ENCODE measurements at regions of chr12 and their contacts with region 1.

Region 1: DNA sequence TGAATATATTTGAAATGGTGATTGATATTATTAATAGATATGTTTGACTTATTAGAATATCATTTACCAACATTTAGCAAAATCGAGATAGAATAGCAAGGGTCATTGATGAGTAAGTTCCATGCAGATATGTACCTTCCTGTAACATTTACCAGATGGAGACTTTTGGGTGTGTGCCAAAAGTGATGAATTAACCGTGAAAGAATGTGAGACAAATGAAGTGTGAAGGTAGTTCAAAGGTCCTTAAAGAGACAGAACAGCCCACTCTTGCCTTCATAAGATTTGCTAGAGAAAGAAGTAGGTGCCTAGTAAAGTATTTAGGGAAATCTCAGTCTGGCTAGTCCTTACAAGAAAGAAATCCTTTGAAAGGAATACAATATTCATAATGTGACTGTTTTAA is 45.5 kb downstream of the FGD4 start:
- DNase-seq: no peak
- ATAC-seq: no peak
- H3K4me3 ChIP-seq: no peak overlapping the region
- H3K4me3 Mint-ChIP-seq: no peak overlapping the region
- H3K27ac ChIP-seq: no peak overlapping the region
- H3K27ac Mint-ChIP-seq: no peak overlapping the region
- H3K4me1 ChIP-seq: no peaks in the 10 kb centered on the region
- H3K4me1 Mint-ChIP-seq: no peaks in the 10 kb centered on the region
- H3K27me3 ChIP-seq: no peaks in the 10 kb centered on the region
- H3K27me3 Mint-ChIP-seq: no peaks in the 10 kb centered on the region
- CTCF ChIP-seq: no peak

Region 2: DNA sequence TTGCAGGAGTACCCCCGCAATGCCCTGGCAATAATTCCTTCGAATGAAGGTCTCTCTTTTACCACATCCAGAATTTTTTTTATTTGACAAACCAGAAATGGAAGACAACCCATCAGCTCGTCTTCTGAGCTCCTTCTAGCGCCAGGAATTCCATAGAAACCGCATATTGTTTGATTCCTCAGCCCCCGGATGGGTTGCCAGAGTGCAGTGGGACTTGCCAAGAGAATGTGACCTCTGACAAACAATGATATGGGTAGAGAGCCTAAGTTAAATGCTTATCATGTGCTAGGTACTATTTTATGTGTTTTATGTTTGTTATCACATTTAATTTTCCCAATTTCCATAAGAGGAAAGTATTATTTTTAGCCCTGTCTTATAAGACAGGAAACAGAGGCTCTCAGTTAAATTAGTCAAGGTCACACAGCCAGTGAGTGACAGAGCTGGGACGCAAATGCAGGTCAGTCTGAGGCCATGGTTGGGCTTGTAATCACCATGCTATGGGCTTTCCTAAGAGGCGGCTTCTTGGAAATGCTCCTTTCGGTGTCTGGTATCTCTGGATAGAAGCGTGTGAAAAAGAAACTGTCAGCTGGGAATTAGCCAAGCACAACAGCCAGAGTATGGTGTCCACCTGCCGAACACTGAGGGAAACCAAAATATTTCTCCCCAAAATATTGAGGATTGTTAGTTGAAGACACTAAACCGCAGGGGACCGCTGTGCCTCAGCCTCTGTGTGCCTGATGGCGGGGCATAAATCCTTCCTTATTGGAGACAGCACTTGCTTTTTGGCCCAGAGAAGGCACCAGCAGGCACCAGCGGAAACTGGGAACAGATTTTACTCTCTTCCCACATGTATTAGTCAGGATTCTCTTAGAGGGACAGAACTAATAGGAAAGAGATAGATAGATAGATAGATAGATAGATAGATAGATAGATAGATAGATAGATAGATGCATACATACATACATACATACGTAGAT is 814.9 kb before region 1 on chr12:
- CTCF ChIA-PET with region 1: no interaction called
- POLR2A ChIA-PET with region 1: interaction called, 11 read pairs
- intact Hi-C with region 1: no loop called
- DNase-seq: no peak
- ATAC-seq: no peak
- H3K4me3 ChIP-seq: no peak overlapping the region
- H3K4me3 Mint-ChIP-seq: no peak overlapping the region
- H3K27ac ChIP-seq: no peak overlapping the region
- H3K27ac Mint-ChIP-seq: no peak overlapping the region
- H3K4me1 ChIP-seq: no peaks in the 10 kb centered on the region
- H3K4me1 Mint-ChIP-seq: no peaks in the 10 kb centered on the region
- H3K27me3 ChIP-seq: no peaks in the 10 kb centered on the region
- H3K27me3 Mint-ChIP-seq: peaks cover 2% of the 10 kb centered on the region
- CTCF ChIP-seq: no peak